Activated CD8-positive, alpha-beta T cell treated with anti-CD3 and anti-CD28 coated beads, Interleukin-2, amount 10 ng/mL, durations not matched to agents 7 days and 5 days (primary cell): ENCODE measurements at regions of chr14 and their contacts with region 1.

Region 1: GRCh38 chr14:34722717-34723545 is 8.5 kb upstream of the CFL2 start:
- DNase-seq: peak; percentile 52
- ATAC-seq: peak; percentile 19
- H3K4me3 Mint-ChIP-seq: no peak overlapping the region
- H3K27ac Mint-ChIP-seq: no peak overlapping the region
- H3K4me1 Mint-ChIP-seq: peaks cover 9% of the 10 kb centered on the region
- H3K27me3 Mint-ChIP-seq: peaks cover 24% of the 10 kb centered on the region

Region 2: GRCh38 chr14:34668111-34668510 is 54.8 kb before region 1 on chr14:
- CTCF ChIA-PET with region 1: interaction called, 25 read pairs
- POLR2A ChIA-PET with region 1: no interaction called
- DNase-seq: no peak
- ATAC-seq: no peak
- H3K4me3 Mint-ChIP-seq: no peak overlapping the region
- H3K27ac Mint-ChIP-seq: no peak overlapping the region
- H3K4me1 Mint-ChIP-seq: peaks cover 4% of the 10 kb centered on the region
- H3K27me3 Mint-ChIP-seq: peaks cover 2% of the 10 kb centered on the region

Region 3: GRCh38 chr14:34673702-34674101 is 49.2 kb before region 1 on chr14:
- CTCF ChIA-PET with region 1: interaction called, 25 read pairs
- POLR2A ChIA-PET with region 1: no interaction called
- DNase-seq: no peak
- ATAC-seq: no peak
- H3K4me3 Mint-ChIP-seq: no peak overlapping the region
- H3K27ac Mint-ChIP-seq: no peak overlapping the region
- H3K4me1 Mint-ChIP-seq: no peaks in the 10 kb centered on the region
- H3K27me3 Mint-ChIP-seq: peaks cover 5% of the 10 kb centered on the region

Region 4: DNA sequence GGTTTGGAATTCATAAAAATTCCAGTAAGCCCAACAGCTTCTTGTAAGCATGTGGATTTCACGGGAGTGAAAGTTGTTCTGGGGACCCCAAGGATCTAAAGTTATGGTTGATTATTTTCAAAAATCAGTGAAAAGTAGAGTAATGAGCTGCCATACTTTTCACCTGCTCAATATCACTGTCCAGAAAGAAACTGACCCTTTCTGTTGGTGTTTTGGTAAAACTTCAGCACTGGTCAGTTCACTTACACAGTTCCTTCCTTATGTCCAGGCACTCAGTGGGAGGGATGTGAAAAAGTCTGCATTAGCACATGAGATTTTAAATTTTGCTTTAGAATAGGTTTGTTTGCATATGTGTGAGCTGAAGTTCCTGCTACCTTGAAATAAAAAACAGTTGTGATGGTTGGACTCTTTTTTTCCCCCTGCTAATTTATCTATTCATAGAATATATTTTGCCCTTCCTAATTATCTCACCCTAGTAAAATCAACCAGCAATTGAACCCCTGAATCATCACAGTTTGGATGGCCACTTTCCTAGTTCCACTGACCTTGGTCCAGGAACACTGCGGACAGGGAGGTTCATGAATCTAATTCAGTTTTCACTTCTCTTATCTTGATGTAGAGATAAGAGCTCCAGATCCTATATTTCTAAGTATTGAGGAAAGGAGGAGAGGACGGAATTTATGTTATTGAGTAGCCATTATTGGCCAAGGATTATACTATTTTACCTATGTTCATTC is 34.3 kb before region 1 on chr14:
- CTCF ChIA-PET with region 1: interaction called, 12 read pairs
- POLR2A ChIA-PET with region 1: no interaction called
- DNase-seq: no peak
- ATAC-seq: no peak
- H3K4me3 Mint-ChIP-seq: no peak overlapping the region
- H3K27ac Mint-ChIP-seq: no peak overlapping the region
- H3K4me1 Mint-ChIP-seq: peaks cover 13% of the 10 kb centered on the region
- H3K27me3 Mint-ChIP-seq: peaks cover 7% of the 10 kb centered on the region

Region 5: GRCh38 chr14:34733235-34733634 is 10.3 kb after region 1 on chr14:
- CTCF ChIA-PET with region 1: interaction called, 20 read pairs
- POLR2A ChIA-PET with region 1: no interaction called
- DNase-seq: no peak
- ATAC-seq: no peak
- H3K4me3 Mint-ChIP-seq: no peak overlapping the region
- H3K27ac Mint-ChIP-seq: no peak overlapping the region
- H3K4me1 Mint-ChIP-seq: no peaks in the 10 kb centered on the region
- H3K27me3 Mint-ChIP-seq: peaks cover 5% of the 10 kb centered on the region

Region 6: GRCh38 chr14:34754681-34755080 is 31.8 kb after region 1 on chr14:
- CTCF ChIA-PET with region 1: no interaction called
- POLR2A ChIA-PET with region 1: no interaction called
- DNase-seq: no peak
- ATAC-seq: no peak
- H3K4me3 Mint-ChIP-seq: no peak overlapping the region
- H3K27ac Mint-ChIP-seq: no peak overlapping the region
- H3K4me1 Mint-ChIP-seq: no peaks in the 10 kb centered on the region
- H3K27me3 Mint-ChIP-seq: no peaks in the 10 kb centered on the region